ENCODE measurements at regions of chr9 and their contacts with region 1.

Region 1: GRCh38 chr9:137342482-137342881 is 40.4 kb upstream of the NRARP start:
- DNase-seq: no peak
- ATAC-seq: no peak
- H3K4me3 Mint-ChIP-seq: no peak overlapping the region
- H3K27ac Mint-ChIP-seq: no peak overlapping the region
- H3K4me1 Mint-ChIP-seq: peaks cover 4% of the 10 kb centered on the region
- H3K27me3 Mint-ChIP-seq: no peaks in the 10 kb centered on the region

Region 2: DNA sequence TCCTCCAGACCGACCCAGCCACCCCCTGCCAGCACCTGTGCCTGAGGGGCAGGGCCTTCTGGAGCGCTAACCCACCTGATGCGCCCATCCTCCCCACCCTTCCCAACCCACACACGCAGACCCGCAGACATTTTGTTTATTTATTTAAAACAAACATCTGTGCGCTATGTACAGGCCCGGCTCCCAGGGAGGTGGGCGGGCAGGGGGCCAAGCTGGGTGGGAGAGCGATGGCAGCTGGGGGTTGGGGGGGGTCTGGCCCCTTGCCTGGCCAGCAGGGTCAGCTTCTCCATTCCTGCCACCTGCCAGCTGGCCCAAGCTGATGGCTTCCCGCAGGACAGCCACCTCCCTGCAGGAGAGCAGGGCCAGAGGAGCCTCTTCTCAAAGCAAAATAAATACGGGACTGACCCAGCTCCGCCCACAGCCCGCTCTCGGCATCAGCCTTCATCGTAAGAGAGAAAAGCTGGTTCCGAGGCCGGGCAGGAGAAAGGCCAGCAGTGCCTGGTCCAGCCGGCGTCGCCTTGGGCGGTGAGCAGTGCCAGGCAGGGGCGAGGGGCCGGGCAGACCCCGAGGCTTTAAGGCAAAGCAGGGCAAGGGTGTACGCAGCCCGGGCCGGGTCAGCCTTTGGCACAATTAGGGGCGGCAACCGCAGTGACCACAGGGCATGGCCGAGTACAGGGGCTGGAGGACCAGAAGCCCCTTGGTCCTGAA is 335.2 kb before region 1 on chr9:
- CTCF ChIA-PET with region 1: no interaction called
- POLR2A ChIA-PET with region 1: no interaction called
- intact Hi-C with region 1: no loop called
- DNase-seq: no peak
- ATAC-seq: no peak
- H3K4me3 Mint-ChIP-seq: no peak overlapping the region
- H3K27ac Mint-ChIP-seq: no peak overlapping the region
- H3K4me1 Mint-ChIP-seq: no peaks in the 10 kb centered on the region
- H3K27me3 Mint-ChIP-seq: no peaks in the 10 kb centered on the region

Region 3: DNA sequence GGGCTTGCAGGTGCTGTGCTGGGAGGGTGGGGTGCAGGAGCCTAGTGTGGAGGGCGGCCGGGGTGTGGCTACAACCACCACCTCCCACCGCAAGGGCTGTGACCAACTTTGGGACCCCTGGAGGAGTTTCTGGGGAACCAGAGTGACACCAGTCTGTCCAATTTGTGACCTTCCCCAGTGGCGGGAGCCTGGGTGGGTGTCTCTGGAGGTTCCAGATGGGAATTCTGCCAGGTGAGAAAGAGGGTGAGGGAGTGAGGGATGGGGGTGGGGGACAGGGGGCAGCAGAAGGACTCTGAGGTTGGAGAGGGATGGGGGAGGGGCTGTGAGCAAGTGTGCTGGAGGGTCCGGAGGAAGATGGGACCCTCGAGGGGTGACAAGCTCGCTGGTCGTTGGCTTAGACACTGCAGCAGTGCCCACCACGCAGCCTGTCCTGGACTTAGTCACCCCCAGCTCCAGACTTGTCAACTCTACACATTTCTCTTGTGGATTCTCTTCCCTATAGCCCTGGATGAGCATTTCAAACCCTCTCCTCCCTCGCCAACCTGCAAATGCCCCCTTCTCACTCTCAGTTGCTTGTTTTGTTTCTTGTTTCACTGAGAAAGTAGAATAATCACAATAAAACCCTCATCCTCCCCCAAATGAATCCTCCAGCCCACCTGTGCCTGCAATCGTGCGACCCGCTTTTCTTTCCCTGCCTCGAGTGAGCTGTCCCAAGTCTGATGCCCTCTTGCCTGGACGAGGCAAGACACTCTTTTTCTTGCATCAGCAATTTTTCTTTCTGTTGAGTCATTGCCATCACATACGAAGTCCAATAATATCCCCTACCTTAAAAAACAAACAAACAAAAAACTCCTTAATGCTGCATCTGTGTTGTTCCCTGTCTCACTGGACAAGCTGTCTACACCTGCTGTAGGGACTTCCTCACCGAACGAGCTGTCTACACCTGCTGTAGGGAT is 531.2 kb after region 1 on chr9:
- CTCF ChIA-PET with region 1: no interaction called
- POLR2A ChIA-PET with region 1: no interaction called
- intact Hi-C with region 1: loop called in 1 of 2 experiments (anchors 5 kb)
- DNase-seq: no peak
- ATAC-seq: no peak
- H3K4me3 Mint-ChIP-seq: no peak overlapping the region
- H3K27ac Mint-ChIP-seq: no peak overlapping the region
- H3K4me1 Mint-ChIP-seq: no peaks in the 10 kb centered on the region
- H3K27me3 Mint-ChIP-seq: peaks cover 24% of the 10 kb centered on the region

Measured in activated CD4-positive, alpha-beta T cell treated with anti-CD3 and anti-CD28 coated beads for 36 hours (primary cell).